ENCODE measurements at regions of chr9 and their contacts with region 1.

Region 1: GRCh38 chr9:99221621-99222415 is at the starts of genes ALG2 and SEC61B:
- DNase-seq: peak; percentile 95 to 97 (median 96)
- ATAC-seq: peak; percentile 98 to 99 (median 98)
- H3K4me3 ChIP-seq: peak within 1 kb of the TSS; percentile 60 to 99 (median 87)
- H3K27ac ChIP-seq: peak within 1 kb of the TSS; percentile 88 to 99 (median 94)
- H3K4me1 ChIP-seq: peaks cover 23 to 76% (median 70%) of the 10 kb centered on the region in 12 donors
- H3K27me3 ChIP-seq: no peaks in the 10 kb centered on the region
- CTCF ChIP-seq: no peak
- POLR2A ChIP-seq: peak; percentile 53 to 95
- total RNA-seq, gene ALG2: 13.0 to 21.6 (median 14.8) TPM
- total RNA-seq, gene SEC61B: 29.9 to 62.5 (median 39.5) TPM

Region 2: DNA sequence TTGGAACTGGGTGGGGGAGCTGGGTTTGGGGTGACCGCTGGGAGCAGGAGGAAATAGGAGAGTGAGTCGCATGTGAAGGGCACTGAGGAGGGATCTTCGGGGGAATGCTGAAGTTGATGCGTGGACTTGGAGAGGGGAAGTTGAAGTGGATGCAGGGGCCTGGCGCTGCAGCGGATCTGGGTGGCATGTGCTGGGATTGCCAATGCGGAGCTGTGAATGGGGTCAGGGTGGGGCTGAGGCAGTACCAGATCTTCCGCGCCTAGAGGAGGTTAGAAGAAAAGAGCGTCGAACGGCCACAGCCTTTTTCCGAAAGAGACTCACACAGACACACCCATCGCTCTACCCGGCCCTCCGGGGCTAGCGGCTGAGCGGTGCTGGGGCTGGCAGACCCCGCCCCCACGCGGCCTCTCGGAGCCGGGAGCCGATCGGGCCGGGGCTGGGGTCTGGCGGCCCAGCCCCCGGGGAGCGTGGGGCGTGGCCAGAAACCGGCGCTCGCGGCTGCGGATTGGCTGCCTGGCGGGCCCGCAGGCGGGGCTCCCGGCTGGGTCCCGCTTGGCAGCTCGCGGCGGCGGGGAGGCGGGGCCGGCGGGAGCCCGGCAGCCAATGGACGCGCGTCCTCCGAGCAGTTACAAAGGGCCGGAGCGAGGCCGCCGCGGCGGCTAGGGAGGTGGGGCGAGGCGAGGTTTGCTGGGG is 117.2 kb before region 1 on chr9 and contains the start of gene TGFBR1:
- intact Hi-C with region 1: loop called in 1 of 10 experiments (anchors 5 kb)
- DNase-seq: peak; percentile 94 to 98 (median 96)
- ATAC-seq: peak; percentile 89 to 96 (median 93)
- H3K4me3 ChIP-seq: peak within 1 kb of the TSS; percentile 63 to 98 (median 88)
- H3K27ac ChIP-seq: peak within 1 kb of the TSS; percentile 73 to 93 (median 90)
- H3K4me1 ChIP-seq: peaks cover 0 to 54% (median 39%) of the 10 kb centered on the region in 12 donors
- H3K27me3 ChIP-seq: no peaks in the 10 kb centered on the region
- CTCF ChIP-seq: peak in 4 of 12 donors; percentile 5 to 31 (median 24)
- POLR2A ChIP-seq: peak; percentile 72 to 91
- total RNA-seq, gene TGFBR1: 8.5 to 41.0 (median 14.7) TPM